ENCODE measurements at regions of chr2 and their contacts with region 1.

Region 1: DNA sequence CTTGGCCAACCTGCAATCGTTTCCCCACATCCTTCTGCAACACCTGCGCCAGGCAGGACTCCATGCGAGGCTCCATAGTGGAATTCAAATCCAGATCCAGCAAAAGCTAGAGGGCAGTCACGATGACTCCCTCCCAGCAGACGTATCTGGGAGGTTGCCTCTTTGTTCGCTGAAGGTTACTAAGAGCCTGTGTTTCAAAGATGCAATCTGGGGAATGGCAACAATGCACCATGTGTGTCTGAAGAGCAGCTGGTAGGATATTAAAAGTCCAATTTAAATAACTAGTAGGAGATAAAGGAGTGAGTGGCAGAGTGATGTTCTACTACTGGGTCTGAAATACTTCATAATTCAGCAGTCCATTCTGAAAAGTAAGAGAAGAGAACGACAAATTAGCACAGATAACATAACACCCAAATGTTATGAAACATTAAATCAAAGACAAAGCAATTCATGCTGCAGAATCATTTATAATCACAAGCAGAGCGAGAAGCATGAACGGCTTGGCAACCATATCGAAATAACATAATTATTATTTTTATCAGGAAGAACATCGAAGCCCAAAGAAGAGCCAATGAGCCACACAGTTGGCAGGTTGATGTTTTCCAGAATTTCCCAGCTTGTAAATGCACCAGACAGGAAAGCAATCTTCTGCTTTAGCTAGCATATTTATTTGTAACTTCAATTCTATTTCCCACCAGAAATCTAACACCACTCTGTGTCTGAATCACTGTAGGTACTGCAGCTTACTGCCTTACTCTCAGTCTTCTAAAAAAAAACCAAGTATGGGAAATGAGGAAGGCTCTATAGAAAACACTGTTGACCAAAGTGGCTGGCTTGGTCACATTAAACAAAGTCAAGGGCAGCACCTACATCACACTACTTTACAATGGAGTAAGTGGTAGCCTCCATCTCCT is 43.2 kb downstream of the CLASP1 start:
- DNase-seq: no peak
- ATAC-seq: peak; percentile 63 to 82 (median 72)
- H3K4me3 ChIP-seq: no peak overlapping the region
- H3K27ac ChIP-seq: peak overlapping the region; percentile 61
- H3K4me1 ChIP-seq: peaks cover 43% of the 10 kb centered on the region
- H3K27me3 ChIP-seq: no peaks in the 10 kb centered on the region
- CTCF ChIP-seq: no peak

Region 2: GRCh38 chr2:121640385-121641316 is 34.6 kb after region 1 on chr2:
- intact Hi-C with region 1: loop called in 1 of 2 experiments (anchors 5 kb)
- DNase-seq: no peak
- ATAC-seq: peak in 3 of 4 donors; percentile 48 to 60 (median 56)
- H3K4me3 ChIP-seq: no peak overlapping the region
- H3K27ac ChIP-seq: peak overlapping the region; percentile 96
- H3K4me1 ChIP-seq: peaks cover 39% of the 10 kb centered on the region
- H3K27me3 ChIP-seq: no peaks in the 10 kb centered on the region
- CTCF ChIP-seq: no peak